HEK293T (cell line): ENCODE measurements at regions of chrX and their contacts with region 1.

Region 1: GRCh38 chrX:107672955-107673378 is 44.7 kb downstream of the PRPS1 start:
- DNase-seq: peak; percentile 82

Region 2: GRCh38 chrX:107571296-107571998 is 101.5 kb before region 1 on chrX:
- CTCF ChIA-PET with region 1: no interaction called
- POLR2A ChIA-PET with region 1: no interaction called
- DNase-seq: no peak

Region 3: GRCh38 chrX:107619885-107620322 is 53.1 kb before region 1 on chrX:
- CTCF ChIA-PET with region 1: no interaction called
- POLR2A ChIA-PET with region 1: no interaction called
- DNase-seq: no peak

Region 4: GRCh38 chrX:107654872-107655761 is 17.9 kb before region 1 on chrX:
- CTCF ChIA-PET with region 1: interaction called, 12 read pairs
- POLR2A ChIA-PET with region 1: interaction called, 10 read pairs
- DNase-seq: peak; percentile 80

Region 5: DNA sequence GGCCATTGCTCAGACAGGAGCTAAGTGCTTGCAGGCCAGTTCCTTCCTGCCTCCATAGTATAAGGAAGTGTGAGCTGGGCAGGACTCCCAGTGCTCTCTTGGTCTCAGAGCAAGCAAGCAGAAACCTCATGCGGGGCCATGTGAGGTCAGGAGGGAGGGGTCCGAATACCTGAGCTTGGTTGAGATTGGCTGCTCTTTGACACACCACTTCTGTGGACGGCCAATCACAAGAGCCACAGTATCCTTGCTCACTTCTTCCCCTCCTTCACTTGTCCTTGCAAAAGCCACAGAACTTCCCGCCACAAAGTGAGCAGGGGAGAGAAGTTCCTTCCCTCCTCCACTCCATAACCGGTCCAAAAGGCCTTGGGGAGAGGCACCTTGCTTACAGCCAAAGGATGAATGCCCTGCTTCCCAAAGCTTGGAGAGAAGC is 12.0 kb after region 1 on chrX:
- CTCF ChIA-PET with region 1: interaction called, 8 read pairs
- POLR2A ChIA-PET with region 1: interaction called, 43 read pairs
- DNase-seq: peak; percentile 47

Region 6: DNA sequence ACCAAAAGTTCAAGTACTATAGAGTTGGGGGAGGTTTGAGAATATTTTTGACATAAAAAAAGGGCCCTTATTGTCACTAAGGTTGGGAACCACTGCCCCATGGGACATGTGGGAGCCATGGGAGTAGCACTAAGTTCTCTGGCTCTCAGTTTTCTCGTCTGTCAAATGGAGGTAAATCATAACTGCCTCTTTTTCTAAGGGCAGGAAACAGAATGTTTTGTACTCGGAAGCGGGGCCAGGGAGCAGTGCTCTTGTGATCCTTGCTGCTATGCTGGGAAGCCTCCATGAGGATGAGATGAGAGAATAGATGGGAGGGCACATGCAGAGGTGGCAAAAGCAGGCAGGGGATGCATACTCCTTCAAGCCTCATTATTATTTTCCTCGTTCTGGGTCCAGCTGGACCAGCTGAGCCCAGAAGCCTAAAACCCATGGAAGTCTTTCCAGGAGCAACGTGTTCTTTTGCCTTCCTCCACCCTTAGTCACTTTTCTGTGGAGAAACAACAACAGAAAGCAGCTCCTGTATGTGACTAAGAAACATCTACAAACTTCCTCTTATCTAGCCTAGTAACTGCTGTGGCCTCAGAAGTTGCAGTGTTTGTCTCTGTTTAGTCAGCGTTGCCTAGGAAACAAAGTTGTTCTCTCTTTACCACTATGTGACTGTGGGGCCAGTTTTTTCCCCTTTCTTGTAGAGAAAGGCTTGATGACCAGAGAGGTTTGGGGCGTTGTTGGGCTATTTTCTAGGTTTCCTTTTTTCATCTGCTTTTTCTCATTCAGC is 37.8 kb after region 1 on chrX:
- CTCF ChIA-PET with region 1: interaction called, 83 read pairs
- POLR2A ChIA-PET with region 1: interaction called, 724 read pairs
- DNase-seq: peak; percentile 59

Region 7: GRCh38 chrX:107725761-107726519 is 53.0 kb after region 1 on chrX:
- CTCF ChIA-PET with region 1: interaction called, 83 read pairs
- POLR2A ChIA-PET with region 1: interaction called, 724 read pairs
- DNase-seq: no peak

Region 8: GRCh38 chrX:107747596-107748161 is 74.7 kb after region 1 on chrX:
- CTCF ChIA-PET with region 1: interaction called, 14 read pairs
- POLR2A ChIA-PET with region 1: interaction called, 20 read pairs
- DNase-seq: peak; percentile 53